ENCODE measurements at regions of chr20 and their contacts with region 1.

Region 1: GRCh38 chr20:2873010-2873746 is at the start of gene PTPRA:
- ATAC-seq: peak; percentile 76 to 95 (median 92)
- H3K4me3 ChIP-seq: peak within 1 kb of the TSS; percentile 71 to 96 (median 80)
- H3K27ac ChIP-seq: peak within 1 kb of the TSS; percentile 81 to 86
- H3K4me1 ChIP-seq: peaks cover 16 to 26% of the 10 kb centered on the region in 2 donors
- total RNA-seq, gene PTPRA: 31.8 to 137 (median 58.2) TPM

Region 2: DNA sequence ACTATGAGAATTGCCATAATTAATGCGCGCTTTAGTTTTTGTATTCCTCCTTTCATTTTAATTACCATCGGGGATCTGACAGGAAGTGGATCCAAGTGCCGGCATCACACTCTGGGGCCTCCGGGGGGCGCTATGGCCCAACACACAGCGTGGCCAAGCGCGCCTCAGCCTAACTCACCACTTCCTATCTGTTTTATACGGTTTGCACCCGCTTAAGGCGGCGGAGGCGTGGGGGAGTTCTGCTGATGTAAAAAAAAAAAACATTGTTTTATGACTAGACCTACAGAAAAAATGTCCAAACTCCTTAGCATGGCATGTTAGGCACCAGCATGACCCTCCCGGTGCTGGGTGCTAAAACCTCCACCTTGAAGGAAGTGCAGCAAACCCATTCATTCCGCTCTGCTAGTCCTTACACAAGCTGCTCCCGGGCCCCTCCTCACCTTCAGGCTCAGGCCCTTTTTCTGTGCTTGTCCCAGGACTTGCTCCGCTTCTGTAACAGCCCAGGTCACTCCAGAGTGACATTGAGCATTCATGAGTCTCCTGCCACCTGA is 185.1 kb before region 1 on chr20:
- in situ Hi-C with region 1: loop called in 1 of 9 experiments (anchors 25 kb)
- ATAC-seq: peak in 5 of 8 experiments; percentile 22 to 82 (median 55)
- H3K4me3 ChIP-seq: no peak overlapping the region
- H3K27ac ChIP-seq: no peak overlapping the region
- H3K4me1 ChIP-seq: peaks cover 0 to 8% of the 10 kb centered on the region in 2 donors